PC-3 (cell line): ENCODE measurements at regions of chr7 and their contacts with region 1.

Region 1: GRCh38 chr7:8190119-8190895 is 71.7 kb downstream of the ICA1 start:
- DNase-seq: peak; percentile 66
- ATAC-seq: peak; percentile 84
- H3K4me3 ChIP-seq: no peak overlapping the region
- H3K27ac ChIP-seq: no peak overlapping the region
- H3K4me1 ChIP-seq: no peaks in the 10 kb centered on the region
- H3K27me3 ChIP-seq: no peaks in the 10 kb centered on the region
- CTCF ChIP-seq: peak; percentile 83

Region 2: DNA sequence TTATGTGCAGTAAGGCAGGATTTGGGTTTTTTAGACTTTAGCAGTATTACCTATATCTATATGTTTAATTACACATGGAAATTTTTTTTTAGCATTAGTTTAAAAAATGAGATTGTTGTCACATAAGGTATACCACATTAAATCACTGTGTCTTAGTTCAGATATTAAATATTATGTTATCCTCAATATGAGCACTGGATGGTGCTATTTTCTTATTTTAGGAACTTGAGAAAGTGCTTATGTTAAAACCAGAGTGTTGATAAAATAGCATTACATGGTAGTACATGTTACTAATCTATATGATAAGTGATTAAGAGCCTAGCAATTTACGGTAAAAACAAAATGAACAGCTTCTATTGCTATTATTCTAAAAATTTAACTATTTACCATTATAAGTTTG is 594.9 kb before region 1 on chr7:
- CTCF ChIA-PET with region 1: no interaction called
- POLR2A ChIA-PET with region 1: no interaction called
- intact Hi-C with region 1: loop called (anchors 1 kb)
- DNase-seq: peak; percentile 62
- ATAC-seq: peak; percentile 61
- H3K4me3 ChIP-seq: no peak overlapping the region
- H3K27ac ChIP-seq: no peak overlapping the region
- H3K4me1 ChIP-seq: no peaks in the 10 kb centered on the region
- H3K27me3 ChIP-seq: no peaks in the 10 kb centered on the region
- CTCF ChIP-seq: peak; percentile 63

Region 3: GRCh38 chr7:7751243-7752092 is 438.8 kb before region 1 on chr7:
- CTCF ChIA-PET with region 1: no interaction called
- POLR2A ChIA-PET with region 1: no interaction called
- intact Hi-C with region 1: no loop called
- DNase-seq: no peak
- ATAC-seq: no peak
- H3K4me3 ChIP-seq: no peak overlapping the region
- H3K27ac ChIP-seq: no peak overlapping the region
- H3K4me1 ChIP-seq: no peaks in the 10 kb centered on the region
- H3K27me3 ChIP-seq: no peaks in the 10 kb centered on the region
- CTCF ChIP-seq: no peak

Region 4: GRCh38 chr7:7911371-7912155 is 278.7 kb before region 1 on chr7:
- CTCF ChIA-PET with region 1: no interaction called
- POLR2A ChIA-PET with region 1: no interaction called
- intact Hi-C with region 1: no loop called
- DNase-seq: peak; percentile 87
- ATAC-seq: peak; percentile 81
- H3K4me3 ChIP-seq: no peak overlapping the region
- H3K27ac ChIP-seq: peak overlapping the region; percentile 70
- H3K4me1 ChIP-seq: peaks cover 34% of the 10 kb centered on the region
- H3K27me3 ChIP-seq: no peaks in the 10 kb centered on the region
- CTCF ChIP-seq: no peak

Region 5: DNA sequence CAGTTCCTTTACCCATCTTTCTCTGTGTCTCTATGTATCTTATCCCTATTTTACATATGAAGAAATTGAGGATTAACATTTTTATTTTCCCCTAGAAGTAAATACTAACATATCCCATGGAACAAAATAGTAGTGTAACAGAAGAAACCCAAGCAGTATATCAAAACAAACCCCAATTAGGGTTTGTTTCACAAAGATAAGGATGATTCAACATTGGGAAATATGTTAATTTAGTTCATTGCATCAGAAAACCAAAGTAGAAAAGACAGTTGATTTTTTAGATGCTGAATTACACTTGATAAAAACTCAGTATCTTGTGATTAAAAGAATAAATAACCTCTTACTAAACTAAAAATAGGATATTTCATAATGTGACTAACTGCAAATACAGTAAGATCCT is 133.9 kb before region 1 on chr7:
- CTCF ChIA-PET with region 1: no interaction called
- POLR2A ChIA-PET with region 1: no interaction called
- intact Hi-C with region 1: loop called (anchors 10 kb)
- DNase-seq: no peak
- ATAC-seq: no peak
- H3K4me3 ChIP-seq: no peak overlapping the region
- H3K27ac ChIP-seq: no peak overlapping the region
- H3K4me1 ChIP-seq: no peaks in the 10 kb centered on the region
- H3K27me3 ChIP-seq: no peaks in the 10 kb centered on the region
- CTCF ChIP-seq: no peak

Region 6: GRCh38 chr7:8201846-8202441 is 11.6 kb after region 1 on chr7:
- CTCF ChIA-PET with region 1: no interaction called
- POLR2A ChIA-PET with region 1: no interaction called
- intact Hi-C with region 1: no loop called
- DNase-seq: no peak
- ATAC-seq: no peak
- H3K4me3 ChIP-seq: no peak overlapping the region
- H3K27ac ChIP-seq: no peak overlapping the region
- H3K4me1 ChIP-seq: no peaks in the 10 kb centered on the region
- H3K27me3 ChIP-seq: no peaks in the 10 kb centered on the region
- CTCF ChIP-seq: no peak